GM13976 (cell line): ENCODE measurements at regions of chr13 and their contacts with region 1.

Region 1: DNA sequence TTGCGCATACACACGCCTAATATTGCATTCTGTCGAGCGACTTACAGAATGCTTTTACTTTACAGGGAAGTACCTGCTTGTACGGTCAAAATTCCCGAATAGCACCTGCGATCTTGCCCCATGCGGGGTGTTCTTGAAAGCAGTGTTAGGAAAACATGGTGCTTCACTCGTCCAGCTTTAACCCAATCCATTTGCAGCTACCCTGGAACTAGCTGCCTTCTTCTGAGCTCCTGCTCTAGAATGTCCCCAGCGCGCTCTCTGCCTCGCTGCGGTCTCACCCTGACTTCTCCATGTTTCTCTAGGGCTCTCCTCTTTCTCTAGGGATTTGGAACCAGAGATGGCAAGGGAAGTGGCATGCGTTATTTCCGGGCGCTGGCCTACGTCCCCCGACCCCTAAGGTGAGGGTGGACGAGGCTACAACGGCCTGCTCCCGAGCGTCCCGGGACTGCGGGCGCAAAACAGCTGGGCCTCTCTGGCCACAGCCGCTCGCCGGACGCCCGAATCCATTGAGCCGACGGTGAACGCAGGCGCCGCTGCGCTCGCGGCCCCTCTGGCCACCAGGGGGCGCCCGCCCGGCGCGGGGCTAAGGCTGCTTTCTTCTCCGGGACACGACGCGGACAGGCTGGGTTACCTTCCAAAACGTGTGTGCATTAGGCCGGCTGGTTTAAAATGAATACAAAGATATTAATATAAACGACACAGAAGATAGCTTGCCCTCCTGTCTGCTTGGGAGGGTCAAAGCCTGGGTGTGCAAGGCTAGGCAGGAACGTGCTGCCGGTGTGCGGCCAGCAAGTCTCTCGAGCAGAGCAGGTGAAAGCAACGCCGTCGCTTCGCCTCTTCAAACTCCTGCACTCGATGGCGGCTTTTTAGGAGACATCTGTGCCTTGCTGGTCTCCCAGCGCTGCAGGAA is 1.8 kb upstream of the SPRY2 start:
- DNase-seq: peak; percentile 79
- CTCF ChIP-seq: peak; percentile 98

Region 2: GRCh38 chr13:81017513-81018152 is 674.9 kb after region 1 on chr13:
- in situ Hi-C with region 1: loop called (anchors 25 kb)
- DNase-seq: peak; percentile 25
- CTCF ChIP-seq: no peak